ENCODE measurements at regions of chr4 and their contacts with region 1.

Region 1: GRCh38 chr4:118729287-118730286 is 44.4 kb downstream of the METTL14 start:
- DNase-seq: no peak
- ATAC-seq: no peak
- H3K4me3 ChIP-seq: no peak overlapping the region
- H3K27ac ChIP-seq: no peak overlapping the region
- H3K4me1 ChIP-seq: peaks cover 0 to 2% of the 10 kb centered on the region in 2 donors
- H3K27me3 ChIP-seq: no peaks in the 10 kb centered on the region

Region 2: GRCh38 chr4:118798658-118799057 is 69.1 kb after region 1 on chr4:
- intact Hi-C with region 1: loop called in 1 of 2 experiments (anchors 10 kb)
- DNase-seq: no peak
- ATAC-seq: no peak
- H3K4me3 ChIP-seq: no peak overlapping the region
- H3K27ac ChIP-seq: no peak overlapping the region
- H3K4me1 ChIP-seq: no peaks in the 10 kb centered on the region
- H3K27me3 ChIP-seq: no peaks in the 10 kb centered on the region